K562 (cell line): ENCODE measurements at regions of chr20 and their contacts with region 1.

Region 1: GRCh38 chr20:49286689-49287551 is 9.1 kb upstream of the ZNFX1 start:
- DNase-seq: peak in 2 of 4 experiments; percentile 31 to 56
- ATAC-seq: peak; percentile 9
- H3K4me3 ChIP-seq: peak overlapping the region; percentile 93; the same call in 1 of the 2 replicates
- H3K27ac ChIP-seq: peak overlapping the region; percentile 66; the same call in 2 of the 3 replicates
- H3K4me1 ChIP-seq: peaks cover 7 to 51% of the 10 kb centered on the region in 2 experiments
- H3K27me3 ChIP-seq: no peaks in the 10 kb centered on the region
- CTCF ChIP-seq: no peak
- EP300 ChIP-seq: 0 out of 2 replicates have a peak, but pooled peaks have one; percentile 2
- POLR2A ChIP-seq: peak; percentile 65
- RAD21 ChIP-seq: no peak

Region 2: DNA sequence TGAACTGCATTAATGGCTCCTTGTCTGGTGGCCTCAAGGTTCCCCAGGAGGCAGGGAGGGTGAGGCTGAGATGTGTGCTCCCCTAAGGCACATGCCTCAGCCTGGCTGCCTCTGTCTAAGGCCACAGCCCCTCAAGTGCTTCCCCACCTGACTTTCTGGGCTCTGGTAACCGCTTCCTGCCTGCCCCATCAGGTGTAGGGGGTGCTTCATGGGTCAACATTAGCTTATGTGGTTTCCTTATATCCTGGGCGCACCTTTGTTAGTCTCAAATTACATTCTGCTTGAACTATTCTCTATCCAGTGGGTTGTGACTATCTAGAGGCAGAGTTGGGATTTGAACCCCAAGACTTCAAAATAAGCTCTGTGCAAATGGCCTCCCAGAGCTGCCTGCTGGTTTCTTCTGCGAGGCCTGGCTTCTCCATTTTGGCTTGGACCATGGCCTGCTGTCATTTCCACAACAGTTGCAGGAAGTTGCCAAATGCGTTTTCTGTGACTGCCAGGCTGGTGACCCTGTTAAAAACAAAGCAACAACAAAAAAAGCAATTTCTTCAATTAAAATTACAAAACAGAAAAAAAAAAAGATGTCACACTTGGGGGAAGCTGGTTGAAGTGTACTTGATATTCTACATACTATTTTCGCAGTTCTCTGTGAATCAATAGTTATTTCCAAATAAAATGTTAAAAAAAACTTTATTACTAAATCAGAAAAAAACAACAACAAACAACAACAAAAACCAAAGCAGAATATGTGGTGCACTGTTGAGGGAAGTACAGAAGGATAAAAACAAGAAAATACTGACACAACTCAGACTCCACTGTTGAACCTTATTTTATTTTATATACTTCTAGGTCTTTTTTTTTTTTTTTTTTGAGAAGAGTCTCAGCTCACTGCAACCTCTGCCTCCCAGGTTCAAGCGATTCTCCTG is 10.9 kb after region 1 on chr20:
- CTCF ChIA-PET with region 1: no interaction called
- POLR2A ChIA-PET with region 1: interaction called, 68 read pairs
- in situ Hi-C with region 1: no loop called
- intact Hi-C with region 1: no loop called
- DNase-seq: no peak
- ATAC-seq: peak; percentile 32; the same call in 1 of the 3 replicates
- H3K4me3 ChIP-seq: no peak overlapping the region
- H3K27ac ChIP-seq: no peak overlapping the region
- H3K4me1 ChIP-seq: no peaks in the 10 kb centered on the region
- H3K27me3 ChIP-seq: no peaks in the 10 kb centered on the region
- CTCF ChIP-seq: no peak
- EP300 ChIP-seq: no peak
- POLR2A ChIP-seq: no peak
- RAD21 ChIP-seq: no peak

Region 3: DNA sequence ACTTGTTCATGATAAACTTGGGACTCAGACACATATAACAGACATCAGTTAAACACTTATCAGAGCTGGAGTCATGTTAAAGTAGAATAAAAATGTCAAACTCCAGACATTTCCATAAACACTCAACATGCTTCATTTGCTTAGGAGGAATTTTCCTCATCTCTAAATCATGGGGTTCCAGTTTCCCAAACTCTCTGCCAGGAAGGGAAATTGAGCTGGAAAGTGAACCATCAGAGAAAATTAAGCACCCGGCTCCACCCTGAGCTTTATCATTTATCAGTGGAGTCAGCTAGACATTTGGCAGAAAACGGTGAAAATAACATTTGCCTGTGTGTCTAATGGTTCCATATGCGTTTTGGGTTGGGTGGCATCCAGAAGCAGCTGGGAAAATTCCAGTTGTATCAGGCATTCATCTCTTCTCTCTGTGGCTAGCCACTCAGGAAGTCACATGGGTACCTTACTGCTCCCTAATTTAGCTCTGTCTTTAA is 16.2 kb after region 1 on chr20:
- CTCF ChIA-PET with region 1: no interaction called
- POLR2A ChIA-PET with region 1: interaction called, 47 read pairs
- in situ Hi-C with region 1: no loop called
- intact Hi-C with region 1: no loop called
- DNase-seq: no peak
- ATAC-seq: no peak
- H3K4me3 ChIP-seq: no peak overlapping the region
- H3K27ac ChIP-seq: no peak overlapping the region
- H3K4me1 ChIP-seq: no peaks in the 10 kb centered on the region
- H3K27me3 ChIP-seq: no peaks in the 10 kb centered on the region
- CTCF ChIP-seq: no peak
- EP300 ChIP-seq: no peak
- POLR2A ChIP-seq: no peak
- RAD21 ChIP-seq: no peak

Region 4: DNA sequence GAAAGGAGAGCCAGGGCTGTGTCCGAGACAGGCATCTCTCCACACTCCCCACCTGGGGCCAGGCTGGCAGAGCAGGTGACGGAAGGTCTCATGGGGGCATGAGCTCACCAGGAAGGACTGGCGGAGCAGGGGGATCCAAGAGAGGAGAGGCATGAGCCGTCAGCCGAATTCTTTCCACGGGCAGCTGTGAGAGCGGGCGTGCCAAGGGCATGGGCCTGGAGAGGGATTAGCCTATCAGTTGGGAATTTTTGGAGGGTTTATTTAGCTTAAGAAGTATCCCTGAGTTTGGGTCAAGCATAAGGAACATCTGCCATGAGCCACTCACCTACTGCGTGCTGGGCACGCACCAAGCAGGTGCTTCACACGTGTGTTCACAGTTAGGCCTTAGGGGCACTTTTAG is 51.1 kb after region 1 on chr20:
- CTCF ChIA-PET with region 1: no interaction called
- POLR2A ChIA-PET with region 1: no interaction called
- in situ Hi-C with region 1: no loop called
- intact Hi-C with region 1: no loop called
- DNase-seq: no peak
- ATAC-seq: no peak
- H3K4me3 ChIP-seq: no peak overlapping the region
- H3K27ac ChIP-seq: no peak overlapping the region
- H3K4me1 ChIP-seq: peaks cover 0 to 4% of the 10 kb centered on the region in 2 experiments; a peak in 2 of 5 replicates
- H3K27me3 ChIP-seq: peaks cover 5 to 31% of the 10 kb centered on the region in 2 experiments
- CTCF ChIP-seq: no peak
- EP300 ChIP-seq: no peak
- POLR2A ChIP-seq: no peak
- RAD21 ChIP-seq: no peak